Right cardiac atrium (tissue), 5 donors: ENCODE measurements at regions of chr3 and their contacts with region 1.

Region 1: GRCh38 chr3:174440741-174441587 is 418.2 kb upstream of the NAALADL2 start:
- DNase-seq: peak; percentile 88 to 95 (median 95)
- ATAC-seq: peak; percentile 91 to 92
- H3K4me3 ChIP-seq: peak overlapping the region; percentile 68
- H3K27ac ChIP-seq: peak overlapping the region; percentile 95
- H3K4me1 ChIP-seq: peaks cover 2% of the 10 kb centered on the region
- H3K27me3 ChIP-seq: no peaks in the 10 kb centered on the region

Region 2: DNA sequence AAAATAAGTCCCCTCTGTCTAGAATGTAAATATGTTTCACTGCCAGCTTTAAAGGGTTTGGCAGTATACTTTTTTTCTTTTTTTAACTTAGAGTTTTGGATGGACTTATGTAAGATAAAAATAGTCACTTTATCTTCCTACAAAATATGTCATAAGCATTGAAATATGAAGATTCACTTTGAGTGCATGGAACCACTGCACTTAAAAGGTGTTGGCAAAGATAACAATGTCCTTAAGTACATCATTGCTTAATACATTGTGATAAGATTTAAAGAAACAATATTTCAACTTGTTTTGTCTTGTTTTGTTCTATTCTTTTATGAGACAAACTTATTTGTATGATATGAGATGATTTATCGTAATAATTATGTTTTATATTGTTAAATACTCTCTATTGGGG is 351.9 kb after region 1 on chr3:
- intact Hi-C with region 1: loop called in 1 of 4 experiments (anchors 10 kb)
- DNase-seq: no peak
- ATAC-seq: no peak
- H3K4me3 ChIP-seq: no peak overlapping the region
- H3K27ac ChIP-seq: no peak overlapping the region
- H3K4me1 ChIP-seq: no peaks in the 10 kb centered on the region
- H3K27me3 ChIP-seq: no peaks in the 10 kb centered on the region